Breast epithelium (tissue), 4 donors: ENCODE measurements at regions of chr3 and their contacts with region 1.

Region 1: GRCh38 chr3:96796101-96796500 is 18.3 kb upstream of the EPHA6 start:
- DNase-seq: no peak
- H3K4me3 ChIP-seq: no peak overlapping the region
- H3K27ac ChIP-seq: no peak overlapping the region
- H3K4me1 ChIP-seq: no peaks in the 10 kb centered on the region
- H3K27me3 ChIP-seq: no peaks in the 10 kb centered on the region
- CTCF ChIP-seq: no peak
- POLR2A ChIP-seq: no peak

Region 2: GRCh38 chr3:96192928-96193550 is 603.1 kb before region 1 on chr3:
- intact Hi-C with region 1: loop called (anchors 5 kb)
- DNase-seq: no peak
- H3K4me3 ChIP-seq: no peak overlapping the region
- H3K27ac ChIP-seq: no peak overlapping the region
- H3K4me1 ChIP-seq: no peaks in the 10 kb centered on the region
- H3K27me3 ChIP-seq: no peaks in the 10 kb centered on the region
- CTCF ChIP-seq: no peak
- POLR2A ChIP-seq: no peak